ENCODE measurements at regions of chr6 and their contacts with region 1.

Region 1: DNA sequence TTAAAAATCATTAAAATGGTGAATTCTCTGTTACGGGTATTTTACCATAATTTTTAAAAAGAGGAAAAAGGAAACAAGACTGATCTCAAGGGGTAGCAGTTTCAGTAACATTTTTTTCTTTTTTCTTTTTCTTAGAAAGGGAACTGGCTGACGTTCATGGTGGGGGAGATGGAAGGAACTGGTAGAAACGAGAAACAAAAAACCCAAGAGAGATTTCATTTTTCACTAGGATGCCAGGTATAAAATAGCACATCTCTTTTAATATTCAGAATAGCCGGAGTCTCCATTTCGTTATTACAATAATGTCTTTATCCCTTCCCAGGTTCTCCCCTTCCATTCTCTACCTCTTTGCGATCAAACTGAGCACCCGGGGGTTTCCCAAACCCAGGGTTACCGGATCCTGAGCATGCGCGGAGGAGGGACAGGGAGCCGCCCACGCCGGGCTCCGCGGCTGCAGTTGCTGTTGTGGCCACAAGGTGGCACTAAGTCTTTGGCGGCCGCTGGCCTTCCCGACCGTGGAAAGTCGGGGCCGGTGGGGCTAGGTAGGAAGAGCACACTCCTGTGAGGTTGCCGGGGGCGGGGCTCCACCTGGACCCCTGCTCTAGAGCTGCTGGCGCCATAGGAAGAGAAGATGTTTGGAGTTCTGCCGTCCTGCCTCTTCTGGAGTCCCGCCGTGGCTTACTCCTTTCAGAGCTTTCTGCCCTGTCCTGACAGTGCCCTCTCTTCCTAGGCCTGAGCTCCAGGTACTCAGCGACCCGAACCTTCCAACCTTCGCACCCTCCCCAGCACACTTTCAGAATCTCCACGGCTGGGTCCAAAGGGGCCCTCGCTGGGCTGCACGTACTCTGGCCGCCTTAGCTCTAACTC is 146.8 kb downstream of the SH3BGRL2 start:
- DNase-seq: peak; percentile 72
- H3K4me3 ChIP-seq: peak overlapping the region; percentile 32 to 67 (median 46)
- H3K27ac ChIP-seq: no peak overlapping the region
- H3K4me1 ChIP-seq: no peaks in the 10 kb centered on the region
- H3K27me3 ChIP-seq: no peaks in the 10 kb centered on the region
- CTCF ChIP-seq: peak; percentile 98 to 99
- POLR2A ChIP-seq: no peak

Region 2: GRCh38 chr6:79756496-79756895 is 21.4 kb before region 1 on chr6:
- CTCF ChIA-PET with region 1: interaction called, 12 read pairs
- POLR2A ChIA-PET with region 1: no interaction called
- dilution Hi-C with region 1: no loop called
- intact Hi-C with region 1: loop called (anchors 1 kb)
- DNase-seq: peak; percentile 43
- H3K4me3 ChIP-seq: no peak overlapping the region
- H3K27ac ChIP-seq: peak overlapping the region; percentile 30
- H3K4me1 ChIP-seq: peaks cover 26% of the 10 kb centered on the region
- H3K27me3 ChIP-seq: no peaks in the 10 kb centered on the region
- CTCF ChIP-seq: no peak
- POLR2A ChIP-seq: no peak

Region 3: GRCh38 chr6:79762370-79762769 is 15.6 kb before region 1 on chr6:
- CTCF ChIA-PET with region 1: interaction called, 12 read pairs
- POLR2A ChIA-PET with region 1: no interaction called
- dilution Hi-C with region 1: no loop called
- intact Hi-C with region 1: no loop called
- DNase-seq: peak; percentile 11
- H3K4me3 ChIP-seq: no peak overlapping the region
- H3K27ac ChIP-seq: no peak overlapping the region
- H3K4me1 ChIP-seq: peaks cover 4% of the 10 kb centered on the region
- H3K27me3 ChIP-seq: no peaks in the 10 kb centered on the region
- CTCF ChIP-seq: peak; percentile 14 to 36
- POLR2A ChIP-seq: no peak

Region 4: DNA sequence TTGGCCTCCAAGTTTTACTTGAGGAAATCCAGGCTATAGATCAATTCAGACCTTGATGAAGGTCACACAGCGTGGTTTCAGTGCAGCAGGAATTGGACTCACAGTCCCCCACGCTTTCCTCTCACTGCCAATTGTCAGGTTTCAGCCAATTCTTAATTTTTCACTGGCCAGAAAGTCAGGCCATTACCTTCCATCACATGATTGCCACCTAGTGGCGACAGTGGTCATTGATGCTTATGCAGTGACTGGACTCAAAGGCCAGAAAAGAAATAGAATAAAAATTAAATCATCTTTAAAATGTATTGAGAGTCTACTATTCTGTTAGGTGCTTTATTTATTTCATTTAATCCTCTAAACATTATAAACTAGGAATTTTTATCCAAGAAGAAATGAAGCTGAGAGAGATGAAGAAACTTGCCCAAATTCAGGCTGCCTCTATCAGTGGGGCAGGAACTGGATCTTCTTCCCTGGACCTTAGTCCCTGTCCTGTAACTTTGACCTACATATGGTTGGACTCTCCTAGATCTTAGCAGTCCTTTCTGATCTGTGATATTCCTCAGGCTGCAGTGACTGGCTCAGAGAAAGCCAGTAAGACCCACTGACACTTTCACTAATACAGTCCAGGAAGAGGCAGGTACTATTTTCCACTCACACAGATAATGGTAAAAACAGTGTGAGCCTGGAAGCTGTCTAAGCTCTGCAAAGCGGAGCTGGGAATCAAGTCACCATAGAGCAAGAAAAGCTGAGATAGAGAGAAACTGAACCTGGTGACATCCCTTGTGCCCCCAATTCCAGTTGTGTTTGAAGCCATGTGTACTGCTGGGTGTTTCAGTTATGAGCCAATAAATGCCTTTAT is 36.1 kb after region 1 on chr6:
- CTCF ChIA-PET with region 1: interaction called, 10 read pairs
- POLR2A ChIA-PET with region 1: no interaction called
- dilution Hi-C with region 1: no loop called
- intact Hi-C with region 1: loop called (anchors 1 kb)
- DNase-seq: peak; percentile 73
- H3K4me3 ChIP-seq: no peak overlapping the region
- H3K27ac ChIP-seq: no peak overlapping the region
- H3K4me1 ChIP-seq: no peaks in the 10 kb centered on the region
- H3K27me3 ChIP-seq: peaks cover 6 to 9% of the 10 kb centered on the region in 2 experiments
- CTCF ChIP-seq: peak; percentile 81
- POLR2A ChIP-seq: no peak

Region 5: GRCh38 chr6:79869600-79870084 is 91.7 kb after region 1 on chr6:
- CTCF ChIA-PET with region 1: interaction called, 59 read pairs
- POLR2A ChIA-PET with region 1: no interaction called
- dilution Hi-C with region 1: no loop called
- intact Hi-C with region 1: loop called (anchors 1 kb)
- DNase-seq: peak; percentile 64
- H3K4me3 ChIP-seq: no peak overlapping the region
- H3K27ac ChIP-seq: no peak overlapping the region
- H3K4me1 ChIP-seq: no peaks in the 10 kb centered on the region
- H3K27me3 ChIP-seq: peaks cover 7% of the 10 kb centered on the region in 2 experiments
- CTCF ChIP-seq: peak; percentile 92 to 99
- POLR2A ChIP-seq: no peak

Region 6: GRCh38 chr6:80094017-80094416 is 316.1 kb after region 1 on chr6:
- CTCF ChIA-PET with region 1: interaction called, 9 read pairs
- POLR2A ChIA-PET with region 1: no interaction called
- dilution Hi-C with region 1: no loop called
- intact Hi-C with region 1: loop called (anchors 1 kb)
- DNase-seq: peak; percentile 38
- H3K4me3 ChIP-seq: no peak overlapping the region
- H3K27ac ChIP-seq: no peak overlapping the region
- H3K4me1 ChIP-seq: no peaks in the 10 kb centered on the region
- H3K27me3 ChIP-seq: peaks cover 5 to 18% of the 10 kb centered on the region in 2 experiments
- CTCF ChIP-seq: peak; percentile 32 to 33
- POLR2A ChIP-seq: no peak

Measured in endothelial cell of umbilical vein (primary cell).